Right ventricle myocardium inferior (tissue), 1 donor: ENCODE measurements at regions of chr2 and their contacts with region 1.

Region 1: DNA sequence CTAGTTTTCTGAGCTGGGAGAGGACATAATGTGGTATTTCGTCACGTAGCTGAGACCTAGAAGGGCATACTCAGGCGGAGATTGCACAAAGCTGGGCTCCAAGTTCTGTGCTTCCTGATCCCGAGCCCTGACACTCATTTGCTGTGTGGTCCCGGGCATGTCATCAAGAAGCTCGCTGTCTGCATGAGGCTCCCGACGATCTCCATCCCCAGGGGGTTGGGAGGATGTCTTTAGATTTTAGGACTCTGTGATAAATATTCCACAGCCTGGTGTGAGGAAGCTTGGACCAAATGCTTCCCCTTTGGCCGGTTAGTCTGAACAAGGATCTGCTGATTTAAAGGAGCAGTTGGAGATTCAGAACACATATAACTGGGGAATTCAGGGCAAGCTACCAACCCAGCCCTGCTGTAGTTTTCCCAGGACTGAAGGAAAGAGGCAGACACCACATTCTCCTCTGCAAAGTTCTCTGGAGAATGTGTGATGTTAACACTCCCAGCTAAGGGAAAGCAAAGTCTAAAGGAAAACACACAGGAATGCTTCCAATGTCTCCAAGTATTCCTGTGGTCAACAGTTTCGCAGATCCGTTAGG is 2.3 kb downstream of the KCNE4 start:
- DNase-seq: peak; percentile 87
- ATAC-seq: peak; percentile 81

Region 2: DNA sequence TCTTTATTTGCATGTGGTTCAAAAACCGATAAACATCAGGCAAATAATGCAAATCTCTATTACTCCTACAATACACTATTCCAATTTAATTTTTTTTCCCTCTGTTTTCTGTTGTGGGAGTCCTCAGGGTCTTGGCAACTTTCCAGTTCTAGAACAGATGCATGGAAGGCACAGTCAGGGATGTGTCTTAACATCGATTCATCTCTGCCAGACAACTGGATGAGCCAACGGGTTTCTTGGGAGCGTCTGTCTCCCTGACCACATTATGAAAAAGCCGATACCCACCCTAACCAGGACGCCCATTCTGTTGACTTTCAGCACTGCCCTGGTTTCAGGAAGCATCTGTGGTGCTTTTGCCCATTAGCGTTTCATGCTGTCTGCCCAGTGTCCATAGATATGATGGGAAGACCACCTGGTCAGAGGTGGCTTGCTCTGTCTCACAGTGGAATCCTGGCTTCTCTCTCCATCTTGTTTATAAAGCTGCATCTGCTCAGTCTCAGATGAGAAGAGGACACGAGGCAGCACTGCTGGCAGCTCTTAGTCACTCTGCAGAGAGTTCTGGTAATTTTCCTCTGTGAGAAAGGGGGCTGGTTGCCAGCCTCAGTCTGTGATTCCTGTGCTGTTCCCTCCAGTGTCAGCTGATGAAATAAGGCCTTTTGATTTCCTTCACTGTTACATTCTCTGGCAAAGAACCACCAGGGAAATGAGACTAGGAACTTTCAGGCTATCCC is 60.2 kb before region 1 on chr2:
- intact Hi-C with region 1: loop called (anchors 2 kb)
- DNase-seq: peak; percentile 82
- ATAC-seq: peak; percentile 98

Region 3: DNA sequence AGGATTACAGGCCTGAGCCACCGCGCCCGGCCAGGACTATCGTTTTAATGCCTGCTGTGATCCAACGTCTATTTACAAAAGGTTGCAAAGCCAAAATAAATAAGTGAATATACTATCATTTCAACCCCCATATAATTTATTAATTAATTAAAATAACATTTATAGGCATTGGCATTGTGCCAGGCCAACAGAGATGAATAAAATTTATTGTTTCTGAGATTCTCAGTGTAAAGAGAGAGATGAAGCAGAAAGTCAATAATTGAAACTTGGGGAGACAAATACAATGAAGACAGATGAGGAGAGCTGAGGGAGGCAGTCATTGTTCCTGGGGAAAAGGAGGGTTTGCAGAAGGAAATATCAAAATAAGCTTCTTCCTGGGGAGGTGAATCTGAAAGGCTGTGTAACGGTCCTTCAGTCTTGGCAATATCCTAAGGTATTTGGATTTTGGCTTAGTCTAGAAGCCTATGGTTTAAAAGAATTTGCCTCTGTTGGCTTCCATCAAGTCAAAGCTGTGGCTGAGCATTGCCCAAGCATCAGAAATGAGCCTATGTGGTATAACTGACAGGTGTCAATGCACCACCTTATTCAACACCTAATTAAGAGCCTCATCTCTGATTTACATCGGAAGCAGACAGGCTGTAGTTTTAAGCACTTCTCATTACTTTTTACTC is 29.2 kb after region 1 on chr2:
- intact Hi-C with region 1: no loop called
- DNase-seq: no peak
- ATAC-seq: no peak

Region 4: GRCh38 chr2:223093436-223094241 is 39.4 kb after region 1 on chr2:
- intact Hi-C with region 1: loop called (anchors 5 kb)
- DNase-seq: peak; percentile 83
- ATAC-seq: peak; percentile 91

Region 5: DNA sequence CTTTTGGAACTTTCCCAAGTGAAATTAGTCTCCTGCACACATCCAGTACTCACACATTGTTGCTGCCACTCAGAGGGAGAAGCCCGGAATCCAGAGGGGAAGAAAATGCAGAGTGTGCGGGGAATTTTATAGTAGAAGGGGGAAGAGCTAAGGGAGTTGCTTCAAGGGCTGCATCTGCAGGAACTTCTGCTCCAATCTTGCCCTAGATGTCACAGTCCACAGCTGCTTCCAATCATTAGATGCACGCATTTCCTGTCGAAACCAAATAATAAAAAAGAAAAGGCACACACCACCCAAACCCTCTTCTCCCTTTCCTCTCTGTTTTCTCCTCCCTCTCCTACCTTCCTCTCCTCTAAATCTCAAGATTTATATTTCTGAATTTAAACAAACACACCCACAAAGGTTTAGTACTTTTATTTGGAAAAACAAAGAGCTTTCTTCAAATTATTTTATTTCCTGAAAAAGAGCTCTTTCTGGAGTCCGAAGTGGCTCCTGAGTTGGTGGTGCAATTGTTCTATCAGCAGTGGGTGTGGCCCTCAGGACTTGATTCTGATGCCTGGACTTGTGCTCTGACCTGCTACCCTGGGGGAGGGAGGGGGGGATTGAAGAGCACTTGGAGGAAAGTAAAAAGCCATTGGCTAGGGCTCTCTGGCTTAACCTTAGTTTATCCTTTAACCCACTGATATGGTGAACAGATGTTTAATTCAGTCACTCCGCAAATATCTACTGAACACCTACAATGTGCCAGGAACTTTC is 69.7 kb after region 1 on chr2:
- intact Hi-C with region 1: no loop called
- DNase-seq: no peak
- ATAC-seq: peak; percentile 80